Head of caudate nucleus (tissue), 42 donors: ENCODE measurements at regions of chr19 and their contacts with region 1.

Region 1: DNA sequence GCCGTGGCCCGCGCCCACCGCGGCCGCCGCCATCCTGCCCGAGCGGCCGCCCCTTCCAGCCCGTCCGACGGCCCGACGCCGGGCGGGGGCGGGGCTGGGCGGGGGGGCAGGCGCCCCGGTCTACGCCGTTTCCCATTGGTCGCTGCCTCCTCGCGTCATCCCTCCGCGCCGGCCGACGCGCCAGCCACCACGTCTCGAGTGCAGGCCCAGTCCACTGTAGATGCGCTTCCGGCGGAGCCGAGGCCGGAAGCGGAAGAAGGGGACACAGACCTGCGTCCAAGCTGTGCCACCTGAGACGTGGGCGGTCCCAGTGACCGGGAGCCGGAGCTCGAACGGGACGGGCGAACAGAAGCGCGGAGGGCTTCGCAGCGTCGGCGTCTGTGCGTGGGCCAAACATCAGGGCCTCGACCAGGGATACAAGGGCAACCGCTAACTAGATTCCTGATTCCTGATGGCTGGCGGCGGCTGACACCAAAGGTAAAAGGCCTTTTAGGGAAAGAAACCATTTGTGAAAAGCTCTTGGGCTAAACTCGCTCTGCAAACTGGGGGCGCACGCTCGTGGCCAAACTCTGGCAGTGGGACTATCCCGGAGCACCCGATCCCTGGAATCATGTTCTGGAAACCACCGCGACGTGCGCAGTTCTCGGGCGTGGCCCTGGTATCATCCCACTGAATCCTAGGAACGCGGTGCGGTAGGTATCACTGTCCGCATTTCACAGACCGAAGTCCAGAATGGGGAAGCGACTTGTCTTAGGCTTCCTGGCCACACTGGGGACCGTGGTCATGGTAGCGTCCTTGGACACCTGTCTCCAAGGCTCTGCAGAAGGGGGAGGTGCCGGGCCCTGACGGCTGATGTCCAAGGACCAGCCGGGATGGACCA is at the start of gene SLC35E1:
- DNase-seq: peak; percentile 85 to 97 (median 94)

Region 2: DNA sequence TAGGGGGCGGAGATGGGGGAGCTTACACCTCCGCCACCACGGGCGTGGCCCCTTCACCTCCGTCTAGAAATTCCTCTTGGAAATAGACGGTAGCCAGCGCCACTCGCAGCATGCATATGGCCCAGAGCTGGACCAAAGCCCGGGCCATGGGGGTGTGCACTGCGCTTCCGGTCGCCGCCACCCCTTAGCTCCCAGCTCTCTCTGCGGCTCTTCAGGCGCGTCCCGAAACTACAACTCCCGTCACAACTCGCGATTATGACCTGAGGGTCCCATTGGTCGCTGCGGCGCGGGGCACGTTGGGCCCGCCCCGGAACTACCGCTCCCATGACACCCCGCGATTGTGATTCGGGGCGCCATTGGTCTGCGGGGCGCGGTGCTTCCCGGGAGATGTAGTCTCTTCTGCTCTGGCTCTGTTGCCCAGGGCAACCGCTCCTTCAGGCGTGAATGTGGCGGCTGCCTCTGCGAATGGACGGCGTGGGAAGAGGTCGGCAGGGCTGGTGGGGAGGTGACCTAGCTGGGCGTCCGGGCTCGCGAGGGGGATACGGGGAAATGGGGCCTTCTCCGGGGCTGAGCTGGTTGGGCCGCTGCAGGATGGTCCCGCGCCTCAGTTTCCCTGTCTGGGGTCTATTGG is 76.5 kb before region 1 on chr19 and contains the starts of genes C19orf44 and CALR3:
- intact Hi-C with region 1: loop called (anchors 2 kb)
- DNase-seq: peak; percentile 97 to 100 (median 99)

Region 3: DNA sequence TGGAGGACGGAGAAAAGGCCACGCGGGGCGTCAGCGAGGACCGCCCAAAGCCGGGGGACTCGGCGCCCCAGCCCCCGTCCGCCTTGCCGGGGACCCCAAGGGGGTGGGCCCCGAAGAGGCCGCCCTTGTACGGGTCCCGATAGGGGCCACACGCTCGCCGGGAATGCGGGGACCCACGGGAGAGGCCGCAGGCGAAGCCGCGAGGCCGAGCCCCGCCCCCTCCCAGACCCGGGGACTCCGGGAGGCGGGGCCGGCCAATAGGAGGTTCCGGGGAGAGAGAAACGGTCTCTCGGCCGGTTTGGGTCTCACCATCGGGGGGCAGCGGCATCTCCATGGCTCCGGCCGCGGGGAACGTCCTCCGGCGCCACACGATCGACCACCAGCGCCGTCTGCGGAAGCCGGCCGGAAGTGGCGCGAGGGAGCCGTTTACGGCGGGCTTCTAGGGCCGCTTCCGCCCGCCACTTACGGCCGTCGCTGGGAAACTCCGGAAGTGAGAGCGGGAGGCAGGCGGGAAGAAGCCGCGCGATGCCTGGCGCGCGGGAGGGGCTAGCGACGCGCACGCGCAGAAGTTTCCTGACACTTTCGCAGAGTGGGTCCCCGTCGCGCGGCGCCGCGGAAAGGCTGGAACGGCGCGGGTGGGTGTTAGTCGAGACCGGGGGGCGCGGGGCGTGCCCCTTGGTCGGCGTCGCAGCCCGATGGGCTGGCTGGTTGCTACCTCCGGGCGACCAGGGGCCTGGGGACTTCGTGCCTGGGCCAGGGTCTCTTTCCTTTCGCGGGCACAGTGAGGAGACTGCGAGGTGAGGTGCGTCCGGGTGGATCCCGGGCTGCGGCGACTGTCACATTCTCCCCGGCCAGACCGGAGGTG is 30.3 kb before region 1 on chr19 and contains the start of gene CHERP:
- intact Hi-C with region 1: loop called (anchors 2 kb)
- DNase-seq: peak; percentile 82 to 97 (median 95)

Region 4: DNA sequence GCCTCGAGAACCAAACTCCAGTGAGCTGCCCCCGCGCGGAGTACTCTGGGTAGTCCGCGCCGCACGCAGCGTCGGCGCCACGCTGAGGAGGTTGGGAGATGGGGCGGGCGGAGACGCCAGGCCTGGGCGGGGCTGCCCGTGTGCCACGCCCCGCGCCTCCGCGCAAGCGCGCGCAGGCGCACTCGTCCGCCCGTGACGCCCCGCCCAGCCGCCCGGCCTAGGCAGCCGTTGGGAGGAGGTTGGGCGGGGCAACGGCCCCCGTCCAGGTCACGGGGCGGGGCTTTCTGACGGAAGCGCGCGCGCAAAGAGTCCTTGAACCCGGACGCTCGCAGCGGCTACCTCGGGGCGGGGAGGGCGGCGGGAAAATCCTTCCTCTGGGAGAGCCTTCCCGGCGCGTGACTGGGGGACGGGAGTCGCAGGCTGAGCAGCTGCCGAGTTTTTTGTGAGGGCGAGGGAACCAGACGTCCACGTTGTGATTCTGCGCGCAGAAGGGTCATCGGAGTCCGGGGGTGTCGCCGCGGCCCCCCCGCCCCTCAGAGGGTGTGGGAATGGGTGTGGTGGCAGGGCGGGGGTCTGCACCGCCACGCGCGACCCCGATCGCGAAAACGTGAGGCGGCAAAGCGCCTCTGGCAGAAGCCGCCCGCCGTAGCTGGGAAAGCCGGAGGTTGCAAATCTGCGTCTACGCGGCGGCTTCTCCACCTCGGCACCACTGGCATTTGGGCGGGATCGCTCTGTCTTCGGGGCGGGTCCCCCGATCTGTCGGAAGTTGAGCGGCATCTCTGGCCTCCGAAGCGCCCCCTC is 55.8 kb after region 1 on chr19 and contains the start of gene MED26:
- intact Hi-C with region 1: loop called (anchors 2 kb)
- DNase-seq: peak; percentile 85 to 97 (median 95)